PC-3 (cell line): ENCODE measurements at regions of chrX and their contacts with region 1.

Region 1: GRCh38 chrX:74458735-74459134 is 37.4 kb downstream of the SLC16A2 start:
- DNase-seq: peak; percentile 93
- ATAC-seq: peak; percentile 94
- H3K4me3 ChIP-seq: no peak overlapping the region
- H3K27ac ChIP-seq: no peak overlapping the region
- H3K4me1 ChIP-seq: peaks cover 10% of the 10 kb centered on the region; the same call in 1 of the 2 replicates
- H3K27me3 ChIP-seq: no peaks in the 10 kb centered on the region
- CTCF ChIP-seq: peak; percentile 61

Region 2: DNA sequence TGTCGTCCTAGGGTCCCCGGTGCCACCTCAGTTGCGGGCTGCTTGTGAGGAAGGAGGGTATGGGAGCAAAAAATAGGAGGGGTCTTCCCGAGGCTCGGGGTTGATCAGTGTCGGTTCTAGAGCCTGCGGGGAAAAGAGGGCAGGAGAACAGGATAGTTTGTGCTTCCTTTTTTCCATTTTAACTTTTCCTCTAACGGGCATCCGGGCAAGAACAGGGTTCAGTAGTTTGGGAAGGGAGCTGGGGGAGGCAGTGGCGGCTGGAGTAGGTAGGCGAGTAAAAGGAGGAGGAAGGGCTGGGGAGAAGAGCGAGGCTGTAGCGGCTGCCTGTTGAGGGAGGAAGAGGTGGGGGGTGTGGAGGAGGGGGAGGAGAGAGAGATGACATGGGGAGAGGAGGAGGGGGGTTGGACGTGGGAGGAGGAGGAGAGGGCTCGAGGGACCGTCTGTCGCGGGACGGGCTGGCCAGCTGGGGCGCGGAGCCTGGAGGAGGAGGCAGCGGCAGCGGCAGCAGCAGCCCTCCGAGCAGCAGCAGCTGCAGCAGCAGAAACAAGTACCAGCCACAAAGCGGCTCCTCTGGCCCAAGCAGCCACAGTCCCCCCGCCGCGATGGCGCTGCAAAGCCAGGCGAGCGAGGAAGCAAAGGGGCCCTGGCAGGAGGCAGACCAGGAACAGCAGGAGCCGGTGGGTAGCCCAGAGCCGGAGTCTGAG is 37.5 kb before region 1 on chrX and contains the start of gene SLC16A2:
- CTCF ChIA-PET with region 1: no interaction called
- POLR2A ChIA-PET with region 1: no interaction called
- intact Hi-C with region 1: loop called (anchors 2 kb)
- DNase-seq: peak; percentile 72
- ATAC-seq: peak; percentile 54
- H3K4me3 ChIP-seq: peak within 1 kb of the TSS; percentile 79
- H3K27ac ChIP-seq: peak within 1 kb of the TSS; percentile 74
- H3K4me1 ChIP-seq: peaks cover 17% of the 10 kb centered on the region
- H3K27me3 ChIP-seq: no peaks in the 10 kb centered on the region
- CTCF ChIP-seq: no peak
- total RNA-seq, gene SLC16A2: 8.5 and 11.1 TPM in 2 replicates

Region 3: DNA sequence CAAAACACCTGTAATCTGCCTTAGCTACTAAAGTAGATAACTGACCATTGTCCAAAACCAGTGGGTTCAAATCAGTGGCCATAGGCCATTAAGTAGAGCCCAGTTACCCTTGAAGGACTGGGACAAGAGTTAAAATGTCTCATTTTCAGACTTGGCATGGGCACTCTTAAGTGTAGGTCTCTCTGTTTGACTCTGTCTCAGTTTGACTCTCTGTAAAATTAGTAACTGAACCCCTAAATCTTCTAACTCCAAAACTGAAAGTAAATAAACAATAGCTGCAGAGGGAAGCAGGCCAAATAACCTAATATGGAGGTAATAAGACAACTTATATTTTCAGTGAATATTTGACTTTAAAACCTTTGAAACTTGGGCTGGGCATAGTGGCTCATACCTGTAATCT is 51.7 kb after region 1 on chrX:
- CTCF ChIA-PET with region 1: no interaction called
- POLR2A ChIA-PET with region 1: no interaction called
- intact Hi-C with region 1: no loop called
- DNase-seq: no peak
- ATAC-seq: no peak
- H3K4me3 ChIP-seq: no peak overlapping the region
- H3K27ac ChIP-seq: no peak overlapping the region
- H3K4me1 ChIP-seq: no peaks in the 10 kb centered on the region
- H3K27me3 ChIP-seq: no peaks in the 10 kb centered on the region
- CTCF ChIP-seq: no peak

Region 4: GRCh38 chrX:74536152-74536831 is 77.6 kb after region 1 on chrX:
- CTCF ChIA-PET with region 1: no interaction called
- POLR2A ChIA-PET with region 1: no interaction called
- intact Hi-C with region 1: loop called (anchors 5 kb)
- DNase-seq: peak; percentile 78
- ATAC-seq: peak; percentile 81
- H3K4me3 ChIP-seq: peak overlapping the region; percentile 71
- H3K27ac ChIP-seq: peak overlapping the region; percentile 23; the same call in 1 of the 2 replicates
- H3K4me1 ChIP-seq: peaks cover 14% of the 10 kb centered on the region
- H3K27me3 ChIP-seq: no peaks in the 10 kb centered on the region
- CTCF ChIP-seq: no peak

Region 5: GRCh38 chrX:74574382-74574781 is 115.6 kb after region 1 on chrX:
- CTCF ChIA-PET with region 1: no interaction called
- POLR2A ChIA-PET with region 1: no interaction called
- intact Hi-C with region 1: no loop called
- DNase-seq: no peak
- ATAC-seq: no peak
- H3K4me3 ChIP-seq: no peak overlapping the region
- H3K27ac ChIP-seq: no peak overlapping the region
- H3K4me1 ChIP-seq: no peaks in the 10 kb centered on the region
- H3K27me3 ChIP-seq: no peaks in the 10 kb centered on the region
- CTCF ChIP-seq: no peak